Testis (tissue), 5 donors: ENCODE measurements at regions of chr15 and their contacts with region 1.

Region 1: GRCh38 chr15:90161950-90162361 is 39.2 kb upstream of the SEMA4B start:
- DNase-seq: no peak
- H3K4me3 ChIP-seq: no peak overlapping the region
- H3K27ac ChIP-seq: no peak overlapping the region
- H3K4me1 ChIP-seq: peaks cover 14% of the 10 kb centered on the region
- H3K27me3 ChIP-seq: no peaks in the 10 kb centered on the region
- CTCF ChIP-seq: no peak
- POLR2A ChIP-seq: no peak

Region 2: GRCh38 chr15:90219421-90220166 is 57.6 kb after region 1 on chr15:
- intact Hi-C with region 1: loop called (anchors 5 kb)
- DNase-seq: no peak
- H3K4me3 ChIP-seq: no peak overlapping the region
- H3K27ac ChIP-seq: no peak overlapping the region
- H3K4me1 ChIP-seq: no peaks in the 10 kb centered on the region
- H3K27me3 ChIP-seq: no peaks in the 10 kb centered on the region
- CTCF ChIP-seq: peak; percentile 27 to 63 (median 30)
- POLR2A ChIP-seq: no peak